ENCODE measurements at regions of chr10 and their contacts with region 1.

Region 1: DNA sequence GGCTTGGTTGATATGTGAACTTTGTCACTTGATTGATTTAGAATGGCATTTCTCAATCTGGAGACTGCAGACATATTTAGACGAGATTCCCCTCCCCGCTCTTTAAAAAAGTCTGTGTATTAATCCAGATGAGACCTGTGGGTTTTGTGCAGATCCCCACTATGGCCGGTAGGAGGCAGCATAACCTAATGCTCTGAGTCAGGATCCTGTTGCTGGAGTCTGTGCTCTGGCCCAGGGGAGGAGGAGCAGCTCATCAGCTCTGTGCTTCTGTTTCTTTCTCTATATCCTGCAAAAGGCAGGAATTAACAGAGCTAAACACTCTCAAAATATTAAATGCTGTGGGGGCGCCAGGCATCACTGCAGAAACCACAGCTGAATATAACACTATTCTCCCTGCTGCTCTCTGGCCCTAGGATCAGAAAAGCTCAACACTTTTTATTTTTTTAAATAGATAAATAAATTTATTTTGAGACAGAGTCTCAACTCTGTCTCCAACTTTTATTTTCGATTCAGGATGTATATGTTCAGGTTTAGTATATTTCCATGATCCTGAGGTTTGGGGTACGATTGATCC is 23.9 kb upstream of the SEPHS1 start:
- DNase-seq: peak; percentile 77 to 82
- H3K4me3 ChIP-seq: no peak overlapping the region
- H3K27ac ChIP-seq: no peak overlapping the region
- H3K4me1 ChIP-seq: no peaks in the 10 kb centered on the region
- H3K27me3 ChIP-seq: no peaks in the 10 kb centered on the region
- CTCF ChIP-seq: peak; percentile 85 to 98 (median 92)
- POLR2A ChIP-seq: no peak

Region 2: DNA sequence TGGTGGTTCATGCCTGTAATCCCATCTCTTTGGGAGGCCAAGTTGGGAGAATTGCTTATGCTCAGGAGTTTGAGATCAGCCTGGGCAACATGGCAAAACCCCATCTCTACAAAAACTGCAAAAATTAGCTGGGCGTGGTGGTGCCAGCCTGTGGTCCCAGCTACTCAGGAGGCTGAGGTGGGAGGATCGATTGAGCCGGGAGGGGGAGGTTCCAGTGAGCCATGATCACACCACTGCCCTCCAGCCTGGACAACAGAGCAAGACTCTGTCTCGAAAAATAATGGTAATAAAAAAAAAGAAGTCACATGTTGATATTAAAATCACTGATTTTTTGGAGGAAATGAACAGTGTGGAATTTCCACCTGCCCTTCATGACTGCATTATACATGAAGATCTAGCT is 87.9 kb before region 1 on chr10:
- intact Hi-C with region 1: no loop called
- DNase-seq: no peak
- H3K4me3 ChIP-seq: no peak overlapping the region
- H3K27ac ChIP-seq: no peak overlapping the region
- H3K4me1 ChIP-seq: no peaks in the 10 kb centered on the region
- H3K27me3 ChIP-seq: no peaks in the 10 kb centered on the region
- CTCF ChIP-seq: no peak
- POLR2A ChIP-seq: no peak

Region 3: GRCh38 chr10:13440185-13441061 is 68.4 kb after region 1 on chr10:
- intact Hi-C with region 1: loop called (anchors 2 kb)
- DNase-seq: peak; percentile 72 to 78
- H3K4me3 ChIP-seq: peak overlapping the region in 1 of 3 donors; percentile 19
- H3K27ac ChIP-seq: no peak overlapping the region
- H3K4me1 ChIP-seq: peaks cover 14 to 21% of the 10 kb centered on the region in 2 donors
- H3K27me3 ChIP-seq: no peaks in the 10 kb centered on the region
- CTCF ChIP-seq: peak; percentile 73 to 96 (median 84)
- POLR2A ChIP-seq: no peak

Measured in thyroid gland (tissue), 4 donors.